Activated T-helper 2 cell treated with anti-CD3 and anti-CD28 coated beads, Interferon-gamma antibody, Interleukin-2, Interleukin-4, amounts not matched to agents 10 μg/mL and 5 μg/mL and 100 μg/mL, durations not matched to agents 14 hours and 24 hours and 36 hours (primary cell): ENCODE measurements at regions of chr11 and their contacts with region 1.

Region 1: GRCh38 chr11:103108933-103109817 is at the start of gene DYNC2H1:
- DNase-seq: peak; percentile 87
- H3K4me3 Mint-ChIP-seq: peak within 1 kb of the TSS; percentile 93
- H3K27ac Mint-ChIP-seq: peak within 1 kb of the TSS; percentile 56
- H3K4me1 Mint-ChIP-seq: peaks cover 7% of the 10 kb centered on the region
- H3K27me3 Mint-ChIP-seq: peaks cover 30% of the 10 kb centered on the region
- total RNA-seq, gene DYNC2H1: 0.46 and 0.67 TPM in 2 replicates

Region 2: GRCh38 chr11:103035791-103036434 is 73.3 kb before region 1 on chr11:
- intact Hi-C with region 1: loop called (anchors 5 kb)
- DNase-seq: peak; percentile 41
- H3K4me3 Mint-ChIP-seq: no peak overlapping the region
- H3K27ac Mint-ChIP-seq: peak overlapping the region; percentile 85
- H3K4me1 Mint-ChIP-seq: peaks cover 21% of the 10 kb centered on the region
- H3K27me3 Mint-ChIP-seq: peaks cover 3% of the 10 kb centered on the region

Region 3: GRCh38 chr11:103091801-103092524 is 17.2 kb before region 1 on chr11 and contains the start of gene DCUN1D5:
- intact Hi-C with region 1: loop called (anchors 1 kb)
- DNase-seq: peak; percentile 92
- H3K4me3 Mint-ChIP-seq: peak within 1 kb of the TSS; percentile 89
- H3K27ac Mint-ChIP-seq: peak within 1 kb of the TSS; percentile 91
- H3K4me1 Mint-ChIP-seq: peaks cover 25% of the 10 kb centered on the region
- H3K27me3 Mint-ChIP-seq: peaks cover 19% of the 10 kb centered on the region
- total RNA-seq, gene DCUN1D5: 59.7 and 66.6 TPM in 2 replicates

Region 4: DNA sequence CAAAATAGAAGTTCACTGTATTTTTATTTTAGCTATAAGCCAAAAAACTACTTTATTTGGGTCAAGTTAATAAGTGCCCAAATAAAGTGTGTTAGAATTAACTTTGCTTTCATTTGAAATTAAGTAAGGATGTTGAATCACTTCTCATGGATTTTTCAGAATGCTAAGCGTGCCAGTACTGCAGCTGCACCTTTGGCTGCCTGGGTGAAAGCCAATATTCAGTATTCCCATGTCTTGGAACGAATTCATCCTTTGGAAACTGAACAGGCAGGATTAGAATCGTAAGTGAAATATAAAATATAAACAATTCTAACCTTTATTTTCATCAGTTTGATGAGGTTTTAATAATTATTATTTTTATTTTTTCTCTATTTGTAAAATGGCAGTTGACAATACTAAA is 113.6 kb after region 1 on chr11:
- intact Hi-C with region 1: no loop called
- DNase-seq: no peak
- H3K4me3 Mint-ChIP-seq: no peak overlapping the region
- H3K27ac Mint-ChIP-seq: no peak overlapping the region
- H3K4me1 Mint-ChIP-seq: no peaks in the 10 kb centered on the region
- H3K27me3 Mint-ChIP-seq: no peaks in the 10 kb centered on the region

Region 5: GRCh38 chr11:103317118-103317517 is 207.9 kb after region 1 on chr11:
- intact Hi-C with region 1: no loop called
- DNase-seq: no peak
- H3K4me3 Mint-ChIP-seq: no peak overlapping the region
- H3K27ac Mint-ChIP-seq: no peak overlapping the region
- H3K4me1 Mint-ChIP-seq: no peaks in the 10 kb centered on the region
- H3K27me3 Mint-ChIP-seq: no peaks in the 10 kb centered on the region

Region 6: GRCh38 chr11:103601225-103601846 is 492.2 kb after region 1 on chr11:
- intact Hi-C with region 1: loop called (anchors 10 kb)
- DNase-seq: no peak
- H3K4me3 Mint-ChIP-seq: no peak overlapping the region
- H3K27ac Mint-ChIP-seq: no peak overlapping the region
- H3K4me1 Mint-ChIP-seq: no peaks in the 10 kb centered on the region
- H3K27me3 Mint-ChIP-seq: no peaks in the 10 kb centered on the region